GM12878 (cell line): ENCODE measurements at regions of chr21 and their contacts with region 1.

Region 1: GRCh38 chr21:29258626-29259335 is 39.9 kb upstream of the BACH1 start:
- DNase-seq: no peak
- ATAC-seq: no peak
- H3K4me3 ChIP-seq: no peak overlapping the region
- H3K27ac ChIP-seq: no peak overlapping the region
- H3K4me1 ChIP-seq: no peaks in the 10 kb centered on the region
- H3K27me3 ChIP-seq: no peaks in the 10 kb centered on the region
- CTCF ChIP-seq: no peak
- EP300 ChIP-seq: no peak
- POLR2A ChIP-seq: no peak
- RAD21 ChIP-seq: no peak

Region 2: GRCh38 chr21:29245104-29245643 is 13.6 kb before region 1 on chr21:
- CTCF ChIA-PET with region 1: interaction called, 14 read pairs
- POLR2A ChIA-PET with region 1: interaction called, 3 read pairs
- RAD21 ChIA-PET with region 1: interaction called, 3 read pairs
- SMC1A ChIA-PET with region 1: interaction called, 46 read pairs
- in situ Hi-C with region 1: no loop called
- intact Hi-C with region 1: no loop called
- DNase-seq: no peak
- ATAC-seq: peak; percentile 84
- H3K4me3 ChIP-seq: no peak overlapping the region
- H3K27ac ChIP-seq: peak overlapping the region; percentile 49
- H3K4me1 ChIP-seq: peaks cover 11% of the 10 kb centered on the region
- H3K27me3 ChIP-seq: no peaks in the 10 kb centered on the region
- CTCF ChIP-seq: no peak
- EP300 ChIP-seq: peak in 1 of 2 experiments; percentile 37; a peak in 1 of 4 replicates
- POLR2A ChIP-seq: no peak
- RAD21 ChIP-seq: no peak

Region 3: GRCh38 chr21:29360799-29361765 is 102.3 kb after region 1 on chr21:
- CTCF ChIA-PET with region 1: no interaction called
- POLR2A ChIA-PET with region 1: no interaction called
- RAD21 ChIA-PET with region 1: no interaction called
- SMC1A ChIA-PET with region 1: no interaction called
- in situ Hi-C with region 1: no loop called
- intact Hi-C with region 1: no loop called
- DNase-seq: no peak
- ATAC-seq: peak; percentile 36; the same call in 1 of the 3 replicates
- H3K4me3 ChIP-seq: no peak overlapping the region
- H3K27ac ChIP-seq: no peak overlapping the region
- H3K4me1 ChIP-seq: no peaks in the 10 kb centered on the region
- H3K27me3 ChIP-seq: no peaks in the 10 kb centered on the region
- CTCF ChIP-seq: peak in 1 of 3 experiments; percentile 5; a peak in 1 of 6 replicates
- EP300 ChIP-seq: no peak
- POLR2A ChIP-seq: no peak
- RAD21 ChIP-seq: 0 out of 2 replicates have a peak, but pooled peaks have one; percentile 8